ENCODE measurements at regions of chr12 and their contacts with region 1.

Region 1: GRCh38 chr12:121668750-121669520 is 519 bp downstream of the MORN3 start:
- DNase-seq: peak; percentile 67
- ATAC-seq: no peak
- H3K4me3 ChIP-seq: no peak overlapping the region
- H3K4me3 Mint-ChIP-seq: no peak overlapping the region
- H3K27ac ChIP-seq: no peak overlapping the region
- H3K27ac Mint-ChIP-seq: peak overlapping the region; percentile 61
- H3K4me1 ChIP-seq: peaks cover 30 to 52% of the 10 kb centered on the region in 2 donors
- H3K4me1 Mint-ChIP-seq: peaks cover 42% of the 10 kb centered on the region
- H3K27me3 ChIP-seq: no peaks in the 10 kb centered on the region
- H3K27me3 Mint-ChIP-seq: no peaks in the 10 kb centered on the region
- CTCF ChIP-seq: peak; percentile 78

Region 2: DNA sequence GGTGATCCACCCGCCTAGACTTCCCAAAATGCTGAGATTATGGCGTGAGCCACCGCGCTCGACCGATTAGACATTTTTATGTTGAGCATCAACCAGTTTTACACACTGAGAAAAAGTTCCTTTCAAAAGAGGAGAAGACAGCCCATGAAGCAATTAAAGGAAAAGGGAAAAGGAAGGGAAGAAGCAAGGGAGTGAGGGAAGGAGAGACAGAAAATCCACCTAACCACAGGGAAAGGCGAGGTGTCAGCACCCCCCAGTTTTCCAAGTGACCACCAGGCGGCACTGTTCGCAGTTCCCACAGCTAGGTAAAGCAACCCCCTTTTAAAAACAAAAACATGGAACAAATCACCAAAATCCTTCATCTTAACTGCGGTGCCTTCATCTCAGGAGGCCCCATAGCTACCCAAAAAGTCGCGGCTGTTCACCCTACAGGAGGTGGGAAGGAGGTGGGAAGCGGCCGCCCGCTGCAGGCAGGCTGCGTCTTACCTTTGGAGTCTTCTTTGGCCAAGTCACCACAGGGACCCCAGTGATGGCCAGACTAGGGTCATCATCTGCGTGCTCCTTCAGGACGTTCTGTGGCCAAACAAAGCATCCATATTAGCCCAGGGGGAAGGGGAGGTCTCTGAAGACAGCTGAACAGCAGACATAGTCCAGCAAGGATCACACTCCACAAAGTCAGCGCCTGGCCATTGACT is 174.7 kb before region 1 on chr12:
- CTCF ChIA-PET with region 1: interaction called, 60 read pairs
- POLR2A ChIA-PET with region 1: interaction called, 8 read pairs
- intact Hi-C with region 1: no loop called
- DNase-seq: peak; percentile 74
- ATAC-seq: peak; percentile 54
- H3K4me3 ChIP-seq: no peak overlapping the region
- H3K4me3 Mint-ChIP-seq: no peak overlapping the region
- H3K27ac ChIP-seq: no peak overlapping the region
- H3K27ac Mint-ChIP-seq: peak overlapping the region; percentile 60
- H3K4me1 ChIP-seq: peaks cover 23 to 42% of the 10 kb centered on the region in 2 donors
- H3K4me1 Mint-ChIP-seq: peaks cover 31% of the 10 kb centered on the region
- H3K27me3 ChIP-seq: no peaks in the 10 kb centered on the region
- H3K27me3 Mint-ChIP-seq: no peaks in the 10 kb centered on the region
- CTCF ChIP-seq: peak; percentile 85

Region 3: DNA sequence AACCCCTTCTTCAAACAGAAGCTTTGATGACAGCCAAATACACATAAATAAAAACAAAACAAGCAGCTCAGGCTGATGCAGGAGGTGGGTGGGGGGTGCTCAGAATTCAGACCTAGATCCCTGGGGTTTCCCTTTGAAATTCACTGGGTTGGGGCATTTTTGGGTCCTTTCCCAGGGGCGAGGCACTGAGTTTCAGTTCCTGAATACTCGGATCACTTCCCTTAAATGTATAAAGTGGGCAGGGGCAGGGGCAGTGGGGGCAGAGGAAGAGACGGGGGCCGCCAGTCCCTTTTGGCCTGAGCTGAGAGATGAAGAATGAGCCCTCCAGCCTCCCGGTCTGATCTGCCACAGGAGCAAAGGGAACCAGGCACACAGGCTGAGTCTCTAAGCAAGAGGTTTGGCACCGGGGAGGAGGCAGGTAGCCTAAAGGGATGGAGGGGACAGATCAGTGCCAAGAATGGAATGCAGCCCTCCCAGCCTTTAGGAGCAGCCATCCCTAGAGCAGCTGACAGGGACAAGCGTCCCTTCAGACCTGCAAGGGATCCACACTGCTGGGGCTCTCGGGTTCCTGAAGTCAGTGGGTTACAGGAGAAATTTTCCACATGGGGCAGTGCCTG is 108.4 kb before region 1 on chr12:
- CTCF ChIA-PET with region 1: interaction called, 10 read pairs
- POLR2A ChIA-PET with region 1: interaction called, 3 read pairs
- intact Hi-C with region 1: no loop called
- DNase-seq: peak; percentile 90
- ATAC-seq: peak; percentile 78
- H3K4me3 ChIP-seq: no peak overlapping the region
- H3K4me3 Mint-ChIP-seq: peak overlapping the region; percentile 53
- H3K27ac ChIP-seq: peak overlapping the region; percentile 58
- H3K27ac Mint-ChIP-seq: peak overlapping the region; percentile 91
- H3K4me1 ChIP-seq: peaks cover 29 to 48% of the 10 kb centered on the region in 2 donors
- H3K4me1 Mint-ChIP-seq: peaks cover 40% of the 10 kb centered on the region
- H3K27me3 ChIP-seq: no peaks in the 10 kb centered on the region
- H3K27me3 Mint-ChIP-seq: no peaks in the 10 kb centered on the region
- CTCF ChIP-seq: no peak

Region 4: GRCh38 chr12:121637231-121637914 is 31.6 kb before region 1 on chr12:
- CTCF ChIA-PET with region 1: interaction called, 12 read pairs
- POLR2A ChIA-PET with region 1: interaction called, 3 read pairs
- intact Hi-C with region 1: no loop called
- DNase-seq: peak; percentile 79
- ATAC-seq: peak; percentile 90
- H3K4me3 ChIP-seq: peak overlapping the region in 4 of 5 experiments; percentile 19 to 46 (median 37)
- H3K4me3 Mint-ChIP-seq: peak overlapping the region; percentile 67
- H3K27ac ChIP-seq: peak overlapping the region; percentile 86 to 89
- H3K27ac Mint-ChIP-seq: peak overlapping the region; percentile 92
- H3K4me1 ChIP-seq: peaks cover 29 to 40% of the 10 kb centered on the region in 2 donors
- H3K4me1 Mint-ChIP-seq: peaks cover 40% of the 10 kb centered on the region
- H3K27me3 ChIP-seq: no peaks in the 10 kb centered on the region
- H3K27me3 Mint-ChIP-seq: no peaks in the 10 kb centered on the region
- CTCF ChIP-seq: no peak

Region 5: DNA sequence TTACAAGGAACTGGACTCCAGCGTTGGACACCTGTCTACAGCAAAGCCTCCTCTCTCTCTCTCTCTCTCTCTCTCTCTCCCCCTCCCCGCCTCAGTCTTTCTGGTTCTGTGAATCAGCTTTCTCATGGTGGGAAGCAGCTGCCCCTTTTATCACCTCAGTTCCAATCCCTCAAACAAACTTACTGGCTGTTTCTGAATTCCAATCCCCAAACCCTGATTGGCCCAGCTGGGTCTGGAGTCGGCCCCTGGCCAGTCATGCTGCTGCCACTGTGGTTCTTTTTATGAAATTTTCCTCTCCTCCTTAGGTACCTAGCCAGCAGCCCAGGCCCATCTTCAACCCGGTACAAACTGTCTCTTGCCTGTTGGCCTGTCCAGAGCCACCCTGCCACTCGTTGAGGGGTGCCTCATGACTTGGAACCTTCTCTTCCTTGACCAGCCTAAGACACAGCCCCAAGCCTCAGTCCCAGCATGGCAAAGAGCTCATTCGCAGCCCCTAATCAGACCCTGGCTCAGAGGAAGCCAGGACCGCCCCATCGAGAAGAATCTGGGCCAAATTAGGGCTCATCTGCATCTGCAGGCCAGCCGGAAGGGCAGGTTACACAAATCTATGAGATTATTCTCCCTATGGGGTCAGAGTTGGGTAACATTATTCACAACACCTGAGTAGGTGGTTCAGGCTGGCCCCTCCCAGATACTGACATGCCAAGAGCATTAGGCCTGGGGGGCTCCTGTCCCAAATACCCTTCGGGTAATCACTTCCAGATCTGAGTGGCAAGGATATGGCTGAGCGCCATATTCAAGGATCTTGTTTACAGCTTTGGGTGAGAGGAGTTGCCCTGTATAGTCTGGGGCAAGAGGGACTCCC is 10.0 kb after region 1 on chr12:
- CTCF ChIA-PET with region 1: interaction called, 15 read pairs
- POLR2A ChIA-PET with region 1: no interaction called
- intact Hi-C with region 1: no loop called
- DNase-seq: no peak
- ATAC-seq: no peak
- H3K4me3 ChIP-seq: no peak overlapping the region
- H3K4me3 Mint-ChIP-seq: no peak overlapping the region
- H3K27ac ChIP-seq: no peak overlapping the region
- H3K27ac Mint-ChIP-seq: peak overlapping the region; percentile 65
- H3K4me1 ChIP-seq: peaks cover 0 to 3% of the 10 kb centered on the region in 2 donors
- H3K4me1 Mint-ChIP-seq: peaks cover 2% of the 10 kb centered on the region
- H3K27me3 ChIP-seq: no peaks in the 10 kb centered on the region
- H3K27me3 Mint-ChIP-seq: no peaks in the 10 kb centered on the region
- CTCF ChIP-seq: no peak

Region 6: GRCh38 chr12:121788176-121788818 is 119.4 kb after region 1 on chr12:
- CTCF ChIA-PET with region 1: no interaction called
- POLR2A ChIA-PET with region 1: no interaction called
- intact Hi-C with region 1: no loop called
- DNase-seq: peak; percentile 23
- ATAC-seq: no peak
- H3K4me3 ChIP-seq: peak overlapping the region in 3 of 5 experiments; percentile 5 to 59 (median 58)
- H3K4me3 Mint-ChIP-seq: peak overlapping the region; percentile 88
- H3K27ac ChIP-seq: peak overlapping the region; percentile 90 to 100
- H3K27ac Mint-ChIP-seq: peak overlapping the region; percentile 98
- H3K4me1 ChIP-seq: peaks cover 81 to 93% of the 10 kb centered on the region in 2 donors
- H3K4me1 Mint-ChIP-seq: peaks cover 84% of the 10 kb centered on the region
- H3K27me3 ChIP-seq: no peaks in the 10 kb centered on the region
- H3K27me3 Mint-ChIP-seq: no peaks in the 10 kb centered on the region
- CTCF ChIP-seq: no peak